ENCODE measurements at regions of chr10 and their contacts with region 1.

Region 1: GRCh38 chr10:81944609-81945008 is 69.6 kb downstream of the NRG3 start:
- DNase-seq: no peak

Region 2: DNA sequence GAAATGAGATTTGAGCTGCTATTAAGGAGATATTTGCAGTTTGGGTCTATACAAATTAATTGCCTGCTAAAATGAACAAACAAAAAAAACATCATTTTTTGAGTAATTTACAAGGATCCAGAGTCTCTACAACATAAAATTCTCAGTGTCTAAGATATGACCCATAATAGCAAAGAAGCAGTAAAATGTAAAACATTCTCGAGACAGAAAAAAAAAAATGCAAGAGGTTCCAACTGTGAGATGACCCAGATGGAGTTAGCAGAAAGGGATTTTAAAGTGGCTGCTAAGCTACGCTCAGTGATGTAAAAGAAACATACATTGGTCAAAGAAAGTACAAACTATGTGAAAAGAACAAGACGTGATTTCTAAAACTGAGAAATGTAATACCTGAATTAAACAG is 935.9 kb before region 1 on chr10:
- intact Hi-C with region 1: no loop called
- DNase-seq: no peak

Region 3: DNA sequence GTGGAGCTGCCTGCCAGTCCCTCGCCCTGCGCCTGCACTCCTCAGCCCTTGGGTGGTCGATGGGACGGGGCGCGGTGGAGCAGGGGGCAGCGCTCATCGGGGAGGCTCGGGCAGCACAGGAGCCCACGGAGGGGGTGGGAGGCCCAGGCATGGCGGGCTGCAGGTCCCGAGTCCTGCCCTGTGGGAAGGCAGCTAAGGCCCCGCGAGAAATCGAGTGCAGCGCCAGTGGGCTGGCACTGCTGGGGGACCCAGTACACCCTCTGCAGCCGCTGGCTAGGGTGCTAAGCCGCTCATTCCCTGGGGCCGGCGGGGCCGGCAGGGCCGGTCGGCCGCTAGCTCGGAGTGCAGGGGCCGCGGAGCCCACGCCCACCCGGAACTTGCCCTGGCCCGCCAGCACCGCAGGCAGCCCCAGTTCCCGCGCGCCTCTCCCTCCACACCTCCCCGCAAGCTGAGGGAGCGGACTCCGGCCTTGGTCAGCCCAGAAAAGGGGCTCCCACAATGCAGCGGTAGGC is 635.5 kb before region 1 on chr10:
- intact Hi-C with region 1: loop called in 1 of 2 experiments (anchors 5 kb)
- DNase-seq: peak; percentile 67

Region 4: GRCh38 chr10:82124713-82125112 is 180.1 kb after region 1 on chr10:
- intact Hi-C with region 1: no loop called
- DNase-seq: no peak

Measured in posterior vena cava (tissue), 2 donors.